ENCODE measurements at regions of chr17 and their contacts with region 1.

Region 1: DNA sequence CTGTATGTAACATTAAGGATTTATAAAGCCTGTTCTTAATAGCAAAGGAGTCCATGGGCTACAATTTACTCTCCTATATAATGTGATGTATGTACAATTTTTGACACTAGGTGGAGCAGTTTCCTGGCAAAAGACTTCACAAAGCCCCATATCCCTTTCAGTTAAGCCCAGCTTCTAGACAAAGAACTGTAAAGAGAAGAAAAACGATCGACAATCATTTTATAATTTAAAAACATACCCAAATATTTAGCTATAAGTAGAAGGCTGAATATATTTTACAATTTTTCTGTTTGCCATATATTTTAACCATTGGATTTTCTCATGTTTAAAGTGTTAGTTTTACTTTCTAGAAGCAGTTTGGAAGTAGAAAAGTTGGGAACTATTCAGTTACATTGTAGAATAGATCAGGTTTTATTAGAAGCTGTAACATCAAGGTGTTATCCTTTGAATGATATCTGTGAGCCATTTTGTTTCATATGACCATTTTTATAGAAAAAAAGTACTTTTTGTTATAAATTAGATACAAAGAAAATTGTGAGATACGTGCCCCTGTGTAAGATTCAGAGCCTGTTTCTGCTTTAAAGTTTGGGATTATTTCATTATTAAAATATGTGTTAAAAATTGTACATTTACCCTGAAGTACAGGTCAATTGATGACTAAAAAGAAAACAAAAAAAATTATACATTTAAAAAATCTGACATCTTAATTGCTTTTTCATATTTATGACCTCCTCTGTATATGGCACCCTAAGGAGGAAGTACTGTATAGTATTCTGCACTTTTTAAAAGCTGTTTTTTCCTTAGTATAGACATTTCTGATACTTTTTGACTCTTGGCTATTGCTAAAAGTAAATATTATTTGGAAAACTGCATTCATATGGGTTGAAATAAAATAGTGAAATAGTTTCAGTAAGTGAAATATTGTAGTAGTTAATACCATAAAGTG is 46.3 kb downstream of the VMP1 start:
- DNase-seq: peak in 1 of 5 donors; percentile 29
- ATAC-seq: peak; percentile 89 to 92 (median 90)
- H3K4me3 ChIP-seq: peak overlapping the region in 5 of 12 donors; percentile 5 to 41 (median 18)
- H3K27ac ChIP-seq: peak overlapping the region in 5 of 12 donors; percentile 2 to 85 (median 36)
- H3K4me1 ChIP-seq: peaks cover 0 to 57% (median 0%) of the 10 kb centered on the region in 12 donors
- H3K27me3 ChIP-seq: no peaks in the 10 kb centered on the region
- CTCF ChIP-seq: peak; percentile 61 to 83 (median 76)
- POLR2A ChIP-seq: no peak

Region 2: GRCh38 chr17:59734226-59734625 is 19.6 kb before region 1 on chr17:
- intact Hi-C with region 1: loop called in 1 of 10 experiments (anchors 1 kb)
- DNase-seq: no peak
- ATAC-seq: no peak
- H3K4me3 ChIP-seq: no peak overlapping the region
- H3K27ac ChIP-seq: no peak overlapping the region
- H3K4me1 ChIP-seq: peaks cover 0 to 15% (median 0%) of the 10 kb centered on the region in 12 donors
- H3K27me3 ChIP-seq: no peaks in the 10 kb centered on the region
- CTCF ChIP-seq: no peak
- POLR2A ChIP-seq: no peak

Region 3: GRCh38 chr17:59786536-59787319 is 32.9 kb after region 1 on chr17:
- intact Hi-C with region 1: no loop called
- DNase-seq: peak in 3 of 5 donors; percentile 49 to 58 (median 52)
- ATAC-seq: peak; percentile 62 to 96 (median 92)
- H3K4me3 ChIP-seq: peak overlapping the region in 7 of 12 donors; percentile 2 to 42 (median 19)
- H3K27ac ChIP-seq: peak overlapping the region; percentile 14 to 97 (median 70)
- H3K4me1 ChIP-seq: peaks cover 5 to 86% (median 31%) of the 10 kb centered on the region in 12 donors
- H3K27me3 ChIP-seq: no peaks in the 10 kb centered on the region
- CTCF ChIP-seq: no peak
- POLR2A ChIP-seq: peak in 1 of 2 donors; percentile 21

Region 4: GRCh38 chr17:59837308-59838051 is 83.7 kb after region 1 on chr17:
- intact Hi-C with region 1: loop called in 8 of 10 experiments (anchors 1 to 5 kb)
- DNase-seq: peak in 4 of 5 donors; percentile 41 to 82 (median 74)
- ATAC-seq: peak; percentile 89 to 97 (median 94)
- H3K4me3 ChIP-seq: peak overlapping the region in 11 of 12 donors; percentile 40 to 77 (median 57)
- H3K27ac ChIP-seq: peak overlapping the region; percentile 77 to 97 (median 90)
- H3K4me1 ChIP-seq: peaks cover 0 to 38% (median 16%) of the 10 kb centered on the region in 12 donors
- H3K27me3 ChIP-seq: no peaks in the 10 kb centered on the region
- CTCF ChIP-seq: peak in 3 of 12 donors; percentile 10 to 23 (median 16)
- POLR2A ChIP-seq: peak in 1 of 2 donors; percentile 54

Region 5: GRCh38 chr17:59842901-59843652 is 89.3 kb after region 1 on chr17:
- intact Hi-C with region 1: loop called in 8 of 10 experiments (anchors 1 to 5 kb)
- DNase-seq: no peak
- ATAC-seq: peak in 3 of 4 donors; percentile 6 to 27 (median 15)
- H3K4me3 ChIP-seq: peak overlapping the region in 2 of 12 donors; percentile 64 to 77
- H3K27ac ChIP-seq: peak overlapping the region in 8 of 12 donors; percentile 3 to 95 (median 30)
- H3K4me1 ChIP-seq: peaks cover 2 to 62% (median 35%) of the 10 kb centered on the region in 12 donors
- H3K27me3 ChIP-seq: no peaks in the 10 kb centered on the region
- CTCF ChIP-seq: no peak
- POLR2A ChIP-seq: no peak

Region 6: DNA sequence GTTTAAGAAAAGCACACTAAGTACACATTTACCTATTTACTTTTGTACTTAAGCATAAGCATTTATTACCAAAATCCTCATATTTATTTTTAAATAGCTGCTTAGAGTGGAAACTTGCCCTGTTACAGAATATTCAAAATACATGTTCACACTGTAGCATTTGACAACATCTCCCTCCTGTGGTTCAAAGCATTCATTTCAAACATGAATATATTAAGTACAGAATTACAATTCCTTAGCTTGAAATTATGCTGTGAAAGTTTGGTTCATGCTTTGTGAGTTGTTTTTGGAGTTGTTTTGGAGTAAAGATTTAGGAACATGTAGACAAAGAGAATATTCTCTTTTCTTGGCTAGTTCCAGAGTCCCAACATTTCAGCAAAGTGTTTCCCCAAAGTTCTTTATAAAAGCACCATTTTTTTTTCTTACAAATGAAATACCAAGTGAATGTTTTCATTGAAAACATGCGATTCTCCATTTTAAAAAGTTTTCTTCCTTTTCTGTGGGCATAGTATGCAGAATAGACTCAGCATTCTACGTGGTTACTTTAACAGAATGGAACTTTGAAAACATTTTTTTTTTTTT is 105.7 kb after region 1 on chr17:
- intact Hi-C with region 1: loop called in 1 of 10 experiments (anchors 5 kb)
- DNase-seq: no peak
- ATAC-seq: peak in 2 of 4 donors; percentile 41 to 49
- H3K4me3 ChIP-seq: no peak overlapping the region
- H3K27ac ChIP-seq: peak overlapping the region in 1 of 12 donors; percentile 28
- H3K4me1 ChIP-seq: peaks cover 0 to 22% (median 0%) of the 10 kb centered on the region in 12 donors
- H3K27me3 ChIP-seq: no peaks in the 10 kb centered on the region
- CTCF ChIP-seq: peak; percentile 30 to 66 (median 49)
- POLR2A ChIP-seq: no peak

Region 7: GRCh38 chr17:60036796-60037612 is 283.2 kb after region 1 on chr17:
- intact Hi-C with region 1: loop called in 5 of 10 experiments (anchors 5 to 10 kb)
- DNase-seq: peak; percentile 24 to 80 (median 66)
- ATAC-seq: peak; percentile 66 to 93 (median 86)
- H3K4me3 ChIP-seq: peak overlapping the region in 1 of 12 donors; percentile 2
- H3K27ac ChIP-seq: no peak overlapping the region
- H3K4me1 ChIP-seq: peaks cover 0 to 6% (median 0%) of the 10 kb centered on the region in 12 donors
- H3K27me3 ChIP-seq: peaks cover 0 to 19% (median 4%) of the 10 kb centered on the region in 9 donors
- CTCF ChIP-seq: peak; percentile 74 to 93 (median 88)
- POLR2A ChIP-seq: no peak

Measured in heart left ventricle (tissue), 16 donors.